ENCODE measurements at regions of chr9 and their contacts with region 1.

Region 1: GRCh38 chr9:92097997-92098482 is 17.2 kb downstream of the SPTLC1 start:
- DNase-seq: peak; percentile 89
- H3K4me3 Mint-ChIP-seq: peak overlapping the region; percentile 24
- H3K27ac Mint-ChIP-seq: no peak overlapping the region
- H3K4me1 Mint-ChIP-seq: peaks cover 26% of the 10 kb centered on the region
- H3K27me3 Mint-ChIP-seq: no peaks in the 10 kb centered on the region
- CTCF ChIP-seq: no peak

Region 2: DNA sequence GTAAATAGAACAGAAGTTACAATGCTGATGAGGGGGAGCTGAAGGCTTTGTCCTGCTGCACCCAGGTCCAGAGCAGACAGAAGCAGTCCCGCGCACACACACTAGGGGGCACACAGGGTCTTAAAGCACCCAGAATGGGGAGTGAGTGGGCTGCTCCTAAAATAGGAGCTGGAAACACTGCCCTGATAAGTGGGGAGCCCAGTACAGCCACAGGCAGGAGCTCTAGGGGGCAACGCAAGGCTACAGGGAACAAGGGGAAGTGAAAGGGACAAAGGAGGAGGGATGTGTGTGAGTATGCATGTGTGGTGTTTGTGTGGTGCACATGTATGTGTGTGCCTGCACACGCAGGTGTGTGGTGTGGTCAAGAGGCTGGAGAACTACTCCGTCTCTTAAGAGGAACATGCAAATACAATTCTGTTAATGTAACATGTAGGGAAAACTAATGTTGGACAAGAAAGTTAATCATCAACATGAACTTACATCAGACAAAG is 339.5 kb before region 1 on chr9:
- CTCF ChIA-PET with region 1: no interaction called
- POLR2A ChIA-PET with region 1: no interaction called
- intact Hi-C with region 1: loop called (anchors 10 kb)
- DNase-seq: peak; percentile 59
- H3K4me3 Mint-ChIP-seq: no peak overlapping the region
- H3K27ac Mint-ChIP-seq: no peak overlapping the region
- H3K4me1 Mint-ChIP-seq: no peaks in the 10 kb centered on the region
- H3K27me3 Mint-ChIP-seq: no peaks in the 10 kb centered on the region
- CTCF ChIP-seq: peak; percentile 72

Region 3: DNA sequence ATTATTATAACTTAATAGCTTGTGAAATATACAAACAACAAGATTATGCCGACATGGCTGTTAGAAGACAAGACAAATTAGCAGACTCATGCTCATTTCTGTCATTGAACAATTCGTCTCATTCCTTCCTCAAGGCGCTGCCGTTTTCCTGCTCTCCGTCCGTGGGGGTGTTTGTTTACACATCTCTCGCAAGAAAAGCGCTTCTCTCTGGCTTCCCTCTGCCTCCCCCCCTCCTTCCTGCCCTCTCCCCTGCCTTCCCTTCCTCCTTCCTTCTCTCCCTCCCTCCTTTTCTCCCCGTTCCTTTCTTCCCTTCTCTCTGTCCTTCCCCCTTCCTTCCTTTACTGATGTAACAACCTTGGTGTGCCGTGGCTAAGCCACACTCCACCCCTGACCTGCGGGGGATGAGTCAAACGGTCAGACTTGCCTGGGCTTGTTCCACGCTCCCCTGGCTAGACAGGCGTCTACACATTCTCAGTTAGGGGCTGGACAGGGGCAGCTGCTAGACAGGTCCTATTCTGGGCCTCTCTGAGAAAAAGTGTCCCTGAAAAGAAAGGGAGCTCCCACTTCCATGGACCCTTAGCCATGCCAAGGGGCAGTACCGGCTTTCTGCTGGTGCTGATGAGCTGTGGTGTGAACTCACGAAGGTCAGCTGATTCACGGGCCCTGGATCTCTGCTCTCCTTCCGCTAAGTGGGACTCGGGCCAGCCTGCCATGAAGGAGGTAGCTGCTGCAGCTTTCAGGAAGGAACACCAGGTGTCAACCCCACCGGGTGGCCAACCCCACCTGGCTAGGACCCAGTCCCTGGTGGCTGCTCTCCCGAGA is 49.2 kb after region 1 on chr9:
- CTCF ChIA-PET with region 1: no interaction called
- POLR2A ChIA-PET with region 1: no interaction called
- intact Hi-C with region 1: no loop called
- DNase-seq: peak; percentile 94
- H3K4me3 Mint-ChIP-seq: peak overlapping the region; percentile 58
- H3K27ac Mint-ChIP-seq: peak overlapping the region; percentile 94
- H3K4me1 Mint-ChIP-seq: peaks cover 35% of the 10 kb centered on the region
- H3K27me3 Mint-ChIP-seq: no peaks in the 10 kb centered on the region
- CTCF ChIP-seq: peak; percentile 11

Region 4: DNA sequence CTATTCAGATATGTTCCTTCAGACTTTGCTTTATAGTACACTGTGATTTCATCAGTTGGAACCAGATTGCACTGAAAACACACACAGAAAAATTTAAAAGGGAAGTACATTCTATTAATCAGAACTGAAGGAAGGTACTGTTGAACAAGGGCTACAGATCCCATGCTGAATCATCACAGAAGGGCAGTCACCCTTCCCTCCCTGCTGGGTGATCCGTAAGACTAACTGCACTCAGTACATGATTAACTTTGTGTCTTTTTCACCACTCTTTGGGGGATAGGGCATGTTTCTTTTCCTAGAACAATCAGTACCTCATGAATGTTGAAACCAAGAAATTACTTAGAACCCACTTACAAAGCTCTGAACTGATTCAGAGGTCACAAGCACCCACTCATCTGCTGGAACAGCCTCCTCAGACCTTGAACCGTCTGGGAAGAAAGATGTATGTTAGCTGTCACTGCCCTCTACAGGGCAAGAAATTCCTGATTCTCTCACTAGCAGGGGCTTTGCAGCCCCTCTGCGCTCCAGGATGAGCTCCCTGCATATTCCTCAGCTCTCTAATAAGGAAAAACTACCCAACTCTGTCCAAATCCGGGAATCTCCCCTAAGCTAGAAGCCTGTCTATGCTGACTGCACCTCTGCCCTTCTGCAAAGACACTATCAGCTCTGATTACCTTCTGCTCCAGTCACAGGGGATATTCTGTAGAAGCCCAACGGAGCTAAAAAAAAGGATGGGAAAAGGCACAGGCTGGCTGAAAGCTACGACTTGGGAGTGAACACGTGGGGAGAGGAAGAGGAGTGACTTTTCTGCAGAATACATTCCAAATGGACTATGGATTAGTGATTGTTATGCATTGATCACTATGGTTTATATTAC is 144.5 kb after region 1 on chr9:
- CTCF ChIA-PET with region 1: no interaction called
- POLR2A ChIA-PET with region 1: no interaction called
- intact Hi-C with region 1: no loop called
- DNase-seq: no peak
- H3K4me3 Mint-ChIP-seq: no peak overlapping the region
- H3K27ac Mint-ChIP-seq: peak overlapping the region; percentile 47
- H3K4me1 Mint-ChIP-seq: peaks cover 23% of the 10 kb centered on the region
- H3K27me3 Mint-ChIP-seq: no peaks in the 10 kb centered on the region
- CTCF ChIP-seq: peak; percentile 14

Measured in MCF 10A (cell line).